Sigmoid colon (tissue), 7 donors: ENCODE measurements at regions of chr2 and their contacts with region 1.

Region 1: DNA sequence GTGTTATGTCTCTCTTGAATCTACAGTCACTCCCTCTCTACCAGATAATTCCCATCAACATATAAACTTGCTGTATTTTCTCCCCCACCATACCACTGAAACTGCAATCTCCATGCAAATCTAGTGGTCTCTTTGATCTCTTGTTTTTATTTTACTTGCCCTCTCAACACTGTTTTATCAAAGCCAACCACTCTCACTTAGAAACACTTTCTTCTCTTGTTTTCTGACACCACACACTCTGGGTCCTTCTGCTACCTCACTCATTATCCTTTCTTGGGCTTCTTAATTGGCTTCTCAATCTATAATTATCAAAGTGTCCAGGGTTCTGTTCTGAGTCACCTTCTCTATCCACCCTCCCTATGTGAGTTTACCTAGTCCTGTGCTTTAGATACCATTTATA is 2.0 kb upstream of the MCFD2 start:
- DNase-seq: no peak
- H3K4me3 ChIP-seq: no peak overlapping the region
- H3K27ac ChIP-seq: no peak overlapping the region
- H3K4me1 ChIP-seq: peaks cover 0 to 35% (median 26%) of the 10 kb centered on the region in 4 donors
- H3K27me3 ChIP-seq: no peaks in the 10 kb centered on the region
- CTCF ChIP-seq: no peak
- EP300 ChIP-seq: no peak
- POLR2A ChIP-seq: no peak

Region 2: GRCh38 chr2:47323009-47323821 is 405.6 kb after region 1 on chr2:
- intact Hi-C with region 1: loop called (anchors 2 kb)
- DNase-seq: peak; percentile 85
- H3K4me3 ChIP-seq: no peak overlapping the region
- H3K27ac ChIP-seq: no peak overlapping the region
- H3K4me1 ChIP-seq: peaks cover 0 to 14% (median 4%) of the 10 kb centered on the region in 4 donors
- H3K27me3 ChIP-seq: no peaks in the 10 kb centered on the region
- CTCF ChIP-seq: peak; percentile 96 to 99 (median 98)
- EP300 ChIP-seq: no peak
- POLR2A ChIP-seq: no peak